ENCODE measurements at regions of chr12 and their contacts with region 1.

Region 1: GRCh38 chr12:95574799-95575452 is 23.6 kb upstream of the USP44 start:
- DNase-seq: peak; percentile 60
- H3K4me3 Mint-ChIP-seq: no peak overlapping the region
- H3K27ac Mint-ChIP-seq: peak overlapping the region; percentile 23
- H3K4me1 Mint-ChIP-seq: no peaks in the 10 kb centered on the region
- H3K27me3 Mint-ChIP-seq: no peaks in the 10 kb centered on the region
- CTCF ChIP-seq: peak; percentile 64

Region 2: DNA sequence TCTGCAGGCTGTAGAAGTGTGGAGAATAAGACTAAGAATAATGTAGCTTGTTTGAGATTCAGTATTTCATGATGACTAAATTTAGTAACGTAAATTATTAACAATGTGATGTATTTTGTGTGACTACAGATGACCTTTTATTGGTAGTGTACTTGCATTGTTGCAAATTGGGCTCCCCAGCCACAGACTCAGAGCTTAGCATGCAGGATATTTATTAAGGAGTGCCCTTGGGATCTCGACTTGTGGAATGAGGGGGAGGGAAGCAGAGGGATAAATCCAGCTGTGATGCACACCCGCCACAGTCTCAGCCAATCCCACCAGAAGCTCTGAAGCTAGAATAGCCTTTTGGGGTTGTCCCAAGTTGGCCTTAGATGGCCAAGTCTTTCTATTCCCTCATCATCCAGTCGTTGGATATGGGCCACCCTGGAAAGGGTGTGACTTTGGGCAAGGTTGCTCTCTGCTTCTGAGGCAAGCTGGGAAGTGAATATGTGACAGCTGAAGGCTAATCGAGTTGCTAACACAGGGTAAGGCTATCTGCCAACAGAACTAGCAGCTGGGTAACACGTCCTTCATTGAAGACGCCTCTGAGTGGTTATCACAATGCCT is 18.4 kb after region 1 on chr12:
- CTCF ChIA-PET with region 1: interaction called, 11 read pairs
- POLR2A ChIA-PET with region 1: no interaction called
- intact Hi-C with region 1: no loop called
- DNase-seq: no peak
- H3K4me3 Mint-ChIP-seq: no peak overlapping the region
- H3K27ac Mint-ChIP-seq: no peak overlapping the region
- H3K4me1 Mint-ChIP-seq: no peaks in the 10 kb centered on the region
- H3K27me3 Mint-ChIP-seq: no peaks in the 10 kb centered on the region
- CTCF ChIP-seq: no peak